Naive thymus-derived CD4-positive, alpha-beta T cell (primary cell): ENCODE measurements at regions of chr14 and their contacts with region 1.

Region 1: GRCh38 chr14:52706724-52707706 is at the start of gene PSMC6:
- DNase-seq: peak; percentile 82 to 93 (median 90)
- ATAC-seq: peak; percentile 99
- H3K4me3 ChIP-seq: peak within 1 kb of the TSS; percentile 74
- H3K4me3 Mint-ChIP-seq: peak within 1 kb of the TSS; percentile 96 to 100 (median 98)
- H3K27ac ChIP-seq: peak within 1 kb of the TSS; percentile 82
- H3K27ac Mint-ChIP-seq: peak within 1 kb of the TSS; percentile 95 to 98 (median 97)
- H3K4me1 ChIP-seq: peaks cover 11 to 16% of the 10 kb centered on the region in 2 donors
- H3K4me1 Mint-ChIP-seq: peaks cover 28 to 60% (median 52%) of the 10 kb centered on the region in 7 donors
- H3K27me3 ChIP-seq: no peaks in the 10 kb centered on the region
- H3K27me3 Mint-ChIP-seq: no peaks in the 10 kb centered on the region
- total RNA-seq, gene PSMC6: 84.8 to 131 (median 95.9) TPM

Region 2: DNA sequence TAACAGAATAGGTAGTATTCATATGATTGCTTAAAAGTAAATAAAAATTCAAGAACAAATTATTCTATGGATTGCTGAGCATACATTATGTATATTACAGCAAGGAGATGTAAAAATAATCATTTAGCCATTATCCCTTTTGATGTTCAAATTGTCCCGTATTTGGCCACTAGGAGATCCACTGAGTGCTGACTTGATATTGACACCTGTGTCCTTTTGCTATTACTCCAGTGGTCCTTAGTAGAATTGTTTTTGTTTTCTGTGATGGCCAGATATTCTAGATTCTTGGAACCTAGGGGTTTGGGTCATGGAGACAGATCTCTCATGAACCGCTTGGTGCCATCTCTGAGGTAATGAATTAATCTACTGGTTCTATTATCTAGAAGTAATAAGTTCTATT is 28.4 kb before region 1 on chr14:
- CTCF ChIA-PET with region 1: no interaction called
- POLR2A ChIA-PET with region 1: interaction called, 3 read pairs
- intact Hi-C with region 1: loop called in 1 of 2 experiments (anchors 2 kb)
- DNase-seq: peak in 4 of 9 donors; percentile 10 to 23 (median 19)
- ATAC-seq: peak; percentile 42
- H3K4me3 ChIP-seq: no peak overlapping the region
- H3K4me3 Mint-ChIP-seq: no peak overlapping the region
- H3K27ac ChIP-seq: no peak overlapping the region
- H3K27ac Mint-ChIP-seq: peak overlapping the region in 1 of 9 donors; percentile 70
- H3K4me1 ChIP-seq: no peaks in the 10 kb centered on the region
- H3K4me1 Mint-ChIP-seq: peaks cover 0 to 20% (median 7%) of the 10 kb centered on the region in 7 donors
- H3K27me3 ChIP-seq: no peaks in the 10 kb centered on the region
- H3K27me3 Mint-ChIP-seq: no peaks in the 10 kb centered on the region

Region 3: DNA sequence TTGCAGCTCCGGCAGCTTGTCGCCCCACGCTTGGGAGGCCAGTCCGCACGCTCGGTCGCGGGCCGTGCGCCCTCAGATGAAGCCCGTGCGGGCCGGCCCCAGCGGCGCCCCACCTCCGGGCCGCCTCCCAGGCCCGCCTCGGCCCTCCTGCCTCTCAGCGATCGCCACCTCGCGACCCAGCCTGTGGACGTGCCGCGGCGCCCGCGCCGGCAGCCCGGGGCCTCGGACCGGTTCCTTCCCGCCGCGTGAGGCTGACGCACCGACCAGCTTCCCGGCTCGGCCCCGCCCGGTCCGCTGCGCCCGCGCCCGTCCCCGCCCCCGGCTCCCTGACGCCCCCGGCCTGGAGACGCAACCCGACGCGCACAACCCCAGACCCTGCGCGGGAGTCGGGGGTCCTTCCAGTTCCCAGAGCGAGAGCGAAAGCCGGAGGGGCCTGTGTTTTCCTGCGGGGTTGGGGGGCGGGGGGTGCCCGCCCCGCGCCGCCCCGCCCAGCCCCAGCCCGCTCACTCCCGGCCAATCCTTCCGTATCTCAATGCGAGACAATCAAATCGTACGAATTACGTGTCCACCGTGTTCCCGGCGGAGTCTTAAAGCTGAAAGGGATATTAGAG is 11.4 kb before region 1 on chr14 and contains the start of gene ERO1A:
- CTCF ChIA-PET with region 1: interaction called, 6 read pairs
- POLR2A ChIA-PET with region 1: interaction called, 10 read pairs
- intact Hi-C with region 1: loop called (anchors 1 kb)
- DNase-seq: peak; percentile 26 to 83 (median 53)
- ATAC-seq: peak; percentile 82
- H3K4me3 ChIP-seq: peak within 1 kb of the TSS; percentile 79
- H3K4me3 Mint-ChIP-seq: peak within 1 kb of the TSS; percentile 95 to 99 (median 99)
- H3K27ac ChIP-seq: peak within 1 kb of the TSS; percentile 85
- H3K27ac Mint-ChIP-seq: peak within 1 kb of the TSS; percentile 94 to 99 (median 98)
- H3K4me1 ChIP-seq: peaks cover 26 to 27% of the 10 kb centered on the region in 2 donors
- H3K4me1 Mint-ChIP-seq: peaks cover 32 to 47% (median 42%) of the 10 kb centered on the region in 7 donors
- H3K27me3 ChIP-seq: no peaks in the 10 kb centered on the region
- H3K27me3 Mint-ChIP-seq: no peaks in the 10 kb centered on the region
- total RNA-seq, gene ERO1A: 65.3 to 201 (median 68.7) TPM

Region 4: GRCh38 chr14:52724360-52724644 is 17.3 kb after region 1 on chr14:
- CTCF ChIA-PET with region 1: no interaction called
- POLR2A ChIA-PET with region 1: interaction called, 6 read pairs
- intact Hi-C with region 1: loop called in 1 of 2 experiments (anchors 1 kb)
- DNase-seq: no peak
- ATAC-seq: no peak
- H3K4me3 ChIP-seq: no peak overlapping the region
- H3K4me3 Mint-ChIP-seq: no peak overlapping the region
- H3K27ac ChIP-seq: peak overlapping the region; percentile 10
- H3K27ac Mint-ChIP-seq: peak overlapping the region in 7 of 9 donors; percentile 30 to 91 (median 71)
- H3K4me1 ChIP-seq: peaks cover 2 to 3% of the 10 kb centered on the region in 2 donors
- H3K4me1 Mint-ChIP-seq: peaks cover 15 to 42% (median 29%) of the 10 kb centered on the region in 7 donors
- H3K27me3 ChIP-seq: no peaks in the 10 kb centered on the region
- H3K27me3 Mint-ChIP-seq: no peaks in the 10 kb centered on the region

Region 5: GRCh38 chr14:52729925-52730667 is 23.1 kb after region 1 on chr14 and contains the start of gene STYX:
- CTCF ChIA-PET with region 1: no interaction called
- POLR2A ChIA-PET with region 1: interaction called, 5 read pairs
- intact Hi-C with region 1: loop called (anchors 1 kb)
- DNase-seq: peak; percentile 91 to 97 (median 94)
- ATAC-seq: peak; percentile 99
- H3K4me3 ChIP-seq: peak within 1 kb of the TSS; percentile 88
- H3K4me3 Mint-ChIP-seq: peak within 1 kb of the TSS; percentile 87 to 95 (median 94)
- H3K27ac ChIP-seq: peak within 1 kb of the TSS; percentile 94
- H3K27ac Mint-ChIP-seq: peak within 1 kb of the TSS; percentile 84 to 97 (median 89)
- H3K4me1 ChIP-seq: peaks cover 14 to 16% of the 10 kb centered on the region in 2 donors
- H3K4me1 Mint-ChIP-seq: peaks cover 18 to 40% (median 33%) of the 10 kb centered on the region in 7 donors
- H3K27me3 ChIP-seq: no peaks in the 10 kb centered on the region
- H3K27me3 Mint-ChIP-seq: no peaks in the 10 kb centered on the region
- total RNA-seq, gene STYX: 23.9 to 45.3 (median 29.2) TPM

Region 6: DNA sequence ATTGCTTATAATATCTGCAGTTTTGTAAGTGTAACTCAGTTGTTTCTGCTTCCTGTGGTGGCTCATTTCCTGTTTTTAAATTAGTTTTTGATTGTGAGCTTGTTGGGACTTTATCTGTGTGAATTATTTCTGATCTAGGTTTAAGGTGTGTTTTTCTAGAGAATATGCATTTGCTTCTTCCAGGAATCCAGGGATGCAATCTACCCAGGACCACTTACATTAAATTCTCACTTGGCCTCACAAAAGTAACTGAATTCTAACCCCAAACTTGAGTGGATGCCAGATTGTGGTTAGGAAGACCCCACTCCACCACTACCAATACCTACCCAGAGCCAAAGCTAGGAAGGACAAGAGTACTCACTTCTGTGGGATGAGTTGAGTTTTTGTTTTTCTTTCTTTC is 34.9 kb after region 1 on chr14:
- CTCF ChIA-PET with region 1: interaction called, 3 read pairs
- POLR2A ChIA-PET with region 1: interaction called, 21 read pairs
- intact Hi-C with region 1: loop called (anchors 1 to 5 kb)
- DNase-seq: peak in 7 of 9 donors; percentile 13 to 52 (median 40)
- ATAC-seq: peak; percentile 60
- H3K4me3 ChIP-seq: peak overlapping the region; percentile 54
- H3K4me3 Mint-ChIP-seq: peak overlapping the region; percentile 75 to 93 (median 84)
- H3K27ac ChIP-seq: peak overlapping the region; percentile 68
- H3K27ac Mint-ChIP-seq: peak overlapping the region; percentile 92 to 100 (median 96)
- H3K4me1 ChIP-seq: peaks cover 48 to 64% of the 10 kb centered on the region in 2 donors
- H3K4me1 Mint-ChIP-seq: peaks cover 42 to 90% (median 74%) of the 10 kb centered on the region in 7 donors
- H3K27me3 ChIP-seq: no peaks in the 10 kb centered on the region
- H3K27me3 Mint-ChIP-seq: no peaks in the 10 kb centered on the region